ENCODE measurements at regions of chr14 and their contacts with region 1.

Region 1: GRCh38 chr14:87066221-87066817 is 926.7 kb downstream of the GALC start:
- DNase-seq: peak; percentile 59
- H3K4me3 ChIP-seq: peak overlapping the region; percentile 22
- H3K27ac ChIP-seq: peak overlapping the region; percentile 99
- H3K4me1 ChIP-seq: peaks cover 69% of the 10 kb centered on the region
- CTCF ChIP-seq: peak; percentile 93

Region 2: DNA sequence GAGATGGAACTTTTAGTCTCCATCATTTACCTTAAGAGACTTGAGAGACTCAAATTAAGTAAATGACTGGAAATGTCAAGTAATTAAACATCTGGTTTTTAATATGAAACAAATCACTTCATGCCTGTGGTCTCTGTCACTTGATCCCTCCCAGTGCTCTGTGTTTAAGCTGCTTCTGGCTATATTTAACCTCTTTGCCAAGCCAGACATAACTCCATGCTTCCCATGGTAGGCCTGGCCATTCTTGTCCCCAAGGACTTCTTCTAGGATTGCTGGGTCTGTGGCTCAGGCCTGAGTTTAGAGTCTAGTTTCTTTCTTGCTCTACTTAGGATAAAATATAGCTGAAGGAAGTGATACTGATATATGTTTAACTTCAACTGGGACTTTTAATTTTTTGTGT is 522.8 kb before region 1 on chr14:
- CTCF ChIA-PET with region 1: no interaction called
- POLR2A ChIA-PET with region 1: no interaction called
- intact Hi-C with region 1: loop called (anchors 5 kb)
- DNase-seq: no peak
- H3K4me3 ChIP-seq: no peak overlapping the region
- H3K27ac ChIP-seq: no peak overlapping the region
- H3K4me1 ChIP-seq: no peaks in the 10 kb centered on the region
- CTCF ChIP-seq: no peak

Region 3: GRCh38 chr14:86902176-86902950 is 164.0 kb before region 1 on chr14:
- CTCF ChIA-PET with region 1: no interaction called
- POLR2A ChIA-PET with region 1: interaction called, 3 read pairs
- intact Hi-C with region 1: loop called (anchors 5 kb)
- DNase-seq: no peak
- H3K4me3 ChIP-seq: no peak overlapping the region
- H3K27ac ChIP-seq: no peak overlapping the region
- H3K4me1 ChIP-seq: no peaks in the 10 kb centered on the region
- CTCF ChIP-seq: no peak

Region 4: GRCh38 chr14:87013583-87013982 is 52.7 kb before region 1 on chr14:
- CTCF ChIA-PET with region 1: no interaction called
- POLR2A ChIA-PET with region 1: no interaction called
- intact Hi-C with region 1: no loop called
- DNase-seq: no peak
- H3K4me3 ChIP-seq: no peak overlapping the region
- H3K27ac ChIP-seq: no peak overlapping the region
- H3K4me1 ChIP-seq: no peaks in the 10 kb centered on the region
- CTCF ChIP-seq: no peak

Region 5: GRCh38 chr14:87044807-87045206 is 21.5 kb before region 1 on chr14:
- CTCF ChIA-PET with region 1: interaction called, 4 read pairs
- POLR2A ChIA-PET with region 1: interaction called, 15 read pairs
- intact Hi-C with region 1: no loop called
- DNase-seq: no peak
- H3K4me3 ChIP-seq: no peak overlapping the region
- H3K27ac ChIP-seq: no peak overlapping the region
- H3K4me1 ChIP-seq: peaks cover 36% of the 10 kb centered on the region
- CTCF ChIP-seq: no peak

Region 6: DNA sequence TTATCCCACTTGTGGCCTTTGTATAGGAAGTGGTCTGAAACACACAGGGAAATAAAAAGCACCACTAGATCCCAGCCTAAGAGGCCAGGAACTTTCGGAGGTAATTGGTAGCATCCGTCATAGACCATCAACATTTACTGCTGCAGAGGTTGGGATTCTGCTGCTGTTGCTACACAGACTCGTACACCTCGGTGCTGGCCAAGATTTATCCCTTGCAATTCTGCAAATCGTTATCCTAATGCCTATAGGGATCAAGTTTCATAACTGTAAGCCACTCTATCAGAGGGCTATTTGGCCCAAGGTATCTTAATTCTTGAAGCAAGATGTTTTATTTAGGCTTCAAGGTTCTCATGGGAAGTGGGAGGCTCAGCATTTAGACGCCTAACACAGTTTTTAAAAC is 13.1 kb after region 1 on chr14:
- CTCF ChIA-PET with region 1: no interaction called
- POLR2A ChIA-PET with region 1: interaction called, 14 read pairs
- intact Hi-C with region 1: no loop called
- DNase-seq: no peak
- H3K4me3 ChIP-seq: no peak overlapping the region
- H3K27ac ChIP-seq: no peak overlapping the region
- H3K4me1 ChIP-seq: peaks cover 4% of the 10 kb centered on the region
- CTCF ChIP-seq: no peak

Region 7: DNA sequence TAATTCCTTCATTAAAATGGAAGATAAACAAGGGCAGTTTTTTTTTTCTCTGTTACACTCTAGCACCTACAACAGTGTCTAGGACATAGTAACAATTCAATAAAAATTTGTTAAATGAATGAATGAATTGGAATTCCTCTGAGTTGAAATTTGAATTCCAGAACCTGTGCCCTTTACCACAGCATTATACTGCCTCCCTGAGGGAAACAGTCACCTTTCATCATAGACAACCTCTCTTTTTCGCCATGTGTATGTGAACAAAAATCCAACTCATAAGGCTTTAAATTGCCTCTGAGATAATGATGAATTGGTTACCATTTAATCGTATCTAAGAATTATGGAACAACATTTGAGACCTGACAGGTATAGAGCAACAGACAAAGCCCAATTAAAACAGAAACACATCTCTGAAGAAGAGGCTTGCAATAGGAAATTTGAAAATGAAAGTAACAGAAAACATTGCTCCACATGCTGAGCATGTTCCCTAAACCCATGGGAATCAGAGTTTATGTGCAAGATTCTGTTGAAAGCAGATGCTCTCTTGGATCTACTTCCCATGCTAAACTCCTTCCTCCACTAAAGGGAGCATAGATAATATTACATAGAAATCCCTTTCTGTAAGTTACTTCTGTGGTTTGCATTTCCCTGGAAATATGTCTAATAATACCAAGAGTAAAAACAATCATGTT is 268.8 kb after region 1 on chr14:
- CTCF ChIA-PET with region 1: no interaction called
- POLR2A ChIA-PET with region 1: interaction called, 4 read pairs
- intact Hi-C with region 1: loop called (anchors 2 kb)
- DNase-seq: peak; percentile 25
- H3K4me3 ChIP-seq: peak overlapping the region; percentile 28
- H3K27ac ChIP-seq: no peak overlapping the region
- H3K4me1 ChIP-seq: peaks cover 3% of the 10 kb centered on the region
- CTCF ChIP-seq: peak; percentile 68

Region 8: DNA sequence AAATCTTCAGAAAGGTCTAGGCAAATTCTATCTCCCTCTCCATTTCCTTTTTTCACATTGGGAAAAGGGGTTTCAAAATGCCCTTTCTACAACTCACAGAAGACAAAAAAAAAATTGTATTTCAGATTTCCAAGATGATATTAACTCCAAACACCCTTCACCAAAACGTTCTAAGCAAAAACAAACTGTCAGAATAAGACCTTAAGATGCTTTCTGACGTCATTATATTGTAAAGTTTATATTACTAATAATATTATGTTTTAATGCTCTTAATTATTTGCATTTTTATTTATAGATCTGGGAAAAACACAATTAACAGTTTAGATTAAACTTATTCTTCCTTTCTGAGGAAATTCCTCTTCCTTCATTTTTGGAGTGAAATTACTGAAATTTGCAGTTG is 302.4 kb after region 1 on chr14:
- CTCF ChIA-PET with region 1: no interaction called
- POLR2A ChIA-PET with region 1: no interaction called
- intact Hi-C with region 1: no loop called
- DNase-seq: no peak
- H3K4me3 ChIP-seq: no peak overlapping the region
- H3K27ac ChIP-seq: no peak overlapping the region
- H3K4me1 ChIP-seq: no peaks in the 10 kb centered on the region
- CTCF ChIP-seq: no peak

Region 9: GRCh38 chr14:87615822-87616679 is 549.7 kb after region 1 on chr14:
- CTCF ChIA-PET with region 1: no interaction called
- POLR2A ChIA-PET with region 1: no interaction called
- intact Hi-C with region 1: loop called (anchors 2 kb)
- DNase-seq: peak; percentile 83
- H3K4me3 ChIP-seq: no peak overlapping the region
- H3K27ac ChIP-seq: peak overlapping the region; percentile 28
- H3K4me1 ChIP-seq: peaks cover 29% of the 10 kb centered on the region
- CTCF ChIP-seq: peak; percentile 92

Measured in OCI-LY7 (cell line).